SK-N-SH (cell line): ENCODE measurements at regions of chr17 and their contacts with region 1.

Region 1: DNA sequence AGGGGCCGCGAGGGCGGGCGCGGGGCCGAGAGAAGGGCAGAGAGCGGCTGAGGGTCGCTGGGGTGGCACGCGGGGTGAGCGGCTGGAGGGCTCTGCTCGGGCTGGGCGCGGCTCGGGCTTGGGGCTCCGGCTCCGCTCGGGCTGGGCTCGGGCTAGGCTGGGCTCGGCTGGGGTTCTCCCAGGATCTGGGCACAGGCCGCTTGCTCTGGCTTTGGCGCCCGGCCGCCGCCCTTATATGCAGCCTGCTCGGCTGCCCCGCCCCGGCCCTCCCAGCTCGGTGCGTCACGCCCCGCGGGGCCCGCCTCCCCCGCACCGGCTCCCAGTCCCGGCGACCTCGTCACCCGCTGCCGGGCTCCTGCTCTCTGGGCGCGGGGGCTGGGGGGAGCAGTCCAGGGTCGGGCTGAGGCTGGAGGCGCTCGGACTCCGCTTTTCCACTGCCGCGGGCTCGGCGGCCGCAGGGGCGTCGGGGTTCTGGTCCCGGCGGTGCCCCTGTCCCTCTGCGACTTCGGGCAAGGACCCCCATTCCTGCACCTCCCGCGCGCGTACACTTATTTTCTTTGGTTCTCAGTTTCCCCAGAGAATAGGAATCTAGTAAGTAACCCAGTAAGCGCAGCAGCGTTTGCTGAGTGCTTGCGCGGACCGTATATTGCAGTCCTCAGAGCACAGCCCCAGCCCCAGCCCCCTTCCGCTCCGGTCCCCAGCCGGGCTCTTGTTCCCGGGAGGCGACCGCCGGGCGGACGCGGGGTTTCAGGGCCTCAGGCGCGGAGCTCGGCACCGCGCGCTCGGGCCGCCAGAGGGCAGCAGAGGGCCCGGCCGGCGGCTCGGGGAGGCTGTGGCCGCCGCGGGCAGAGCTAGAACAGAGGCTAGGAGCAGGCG is at the start of gene RASD1:
- DNase-seq: peak; percentile 98
- H3K4me3 ChIP-seq: peak within 1 kb of the TSS; percentile 63 to 76
- H3K27ac ChIP-seq: peak within 1 kb of the TSS; percentile 44 to 60; a peak in 3 of 4 replicates
- H3K4me1 ChIP-seq: peaks cover 0 to 7% of the 10 kb centered on the region in 2 experiments; a peak in 1 of 4 replicates
- H3K27me3 ChIP-seq: no peaks in the 10 kb centered on the region
- CTCF ChIP-seq: peak; percentile 75
- EP300 ChIP-seq: no peak
- RAD21 ChIP-seq: peak; percentile 78
- polyA plus RNA-seq, gene RASD1: 0.26 and 0.43 TPM in 2 replicates

Region 2: DNA sequence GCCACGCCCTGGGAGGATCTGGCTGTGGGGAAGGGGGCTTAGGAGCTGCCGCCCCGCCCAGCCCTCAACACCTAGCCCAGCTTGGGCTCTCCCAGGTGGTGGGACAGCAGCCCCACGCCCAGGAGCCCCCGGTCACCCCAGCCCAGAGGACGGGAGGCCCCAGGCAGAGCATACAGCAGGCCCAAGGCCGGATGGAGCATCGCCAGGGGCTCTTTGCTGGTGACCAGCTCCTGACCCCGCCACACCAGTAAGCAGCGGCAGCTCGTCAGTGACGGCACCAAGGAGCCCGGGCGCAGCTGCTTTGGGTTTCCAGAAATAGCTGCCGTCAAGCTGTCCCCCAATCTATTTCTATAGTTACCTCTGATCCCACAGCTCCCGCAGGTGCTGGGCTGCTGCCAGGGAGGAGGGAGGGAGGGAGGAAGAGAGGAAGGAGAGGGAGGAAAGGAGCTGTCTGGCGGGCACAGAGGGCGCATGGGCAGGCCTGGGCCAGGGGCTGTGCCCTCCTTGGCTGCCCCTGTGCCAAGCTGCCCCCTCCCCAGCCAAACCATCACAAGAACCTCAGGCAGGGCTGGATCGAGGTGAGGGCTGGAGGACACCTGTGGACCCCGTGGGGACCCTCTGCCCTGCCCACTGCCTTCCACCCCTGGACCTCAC is 10.5 kb after region 1 on chr17:
- CTCF ChIA-PET with region 1: interaction called, 32 read pairs
- POLR2A ChIA-PET with region 1: no interaction called
- DNase-seq: peak; percentile 48
- H3K4me3 ChIP-seq: no peak overlapping the region
- H3K27ac ChIP-seq: no peak overlapping the region
- H3K4me1 ChIP-seq: peaks cover 2 to 21% of the 10 kb centered on the region in 2 experiments; a peak in 2 of 4 replicates
- H3K27me3 ChIP-seq: no peaks in the 10 kb centered on the region
- CTCF ChIP-seq: no peak
- EP300 ChIP-seq: no peak
- RAD21 ChIP-seq: no peak

Region 3: DNA sequence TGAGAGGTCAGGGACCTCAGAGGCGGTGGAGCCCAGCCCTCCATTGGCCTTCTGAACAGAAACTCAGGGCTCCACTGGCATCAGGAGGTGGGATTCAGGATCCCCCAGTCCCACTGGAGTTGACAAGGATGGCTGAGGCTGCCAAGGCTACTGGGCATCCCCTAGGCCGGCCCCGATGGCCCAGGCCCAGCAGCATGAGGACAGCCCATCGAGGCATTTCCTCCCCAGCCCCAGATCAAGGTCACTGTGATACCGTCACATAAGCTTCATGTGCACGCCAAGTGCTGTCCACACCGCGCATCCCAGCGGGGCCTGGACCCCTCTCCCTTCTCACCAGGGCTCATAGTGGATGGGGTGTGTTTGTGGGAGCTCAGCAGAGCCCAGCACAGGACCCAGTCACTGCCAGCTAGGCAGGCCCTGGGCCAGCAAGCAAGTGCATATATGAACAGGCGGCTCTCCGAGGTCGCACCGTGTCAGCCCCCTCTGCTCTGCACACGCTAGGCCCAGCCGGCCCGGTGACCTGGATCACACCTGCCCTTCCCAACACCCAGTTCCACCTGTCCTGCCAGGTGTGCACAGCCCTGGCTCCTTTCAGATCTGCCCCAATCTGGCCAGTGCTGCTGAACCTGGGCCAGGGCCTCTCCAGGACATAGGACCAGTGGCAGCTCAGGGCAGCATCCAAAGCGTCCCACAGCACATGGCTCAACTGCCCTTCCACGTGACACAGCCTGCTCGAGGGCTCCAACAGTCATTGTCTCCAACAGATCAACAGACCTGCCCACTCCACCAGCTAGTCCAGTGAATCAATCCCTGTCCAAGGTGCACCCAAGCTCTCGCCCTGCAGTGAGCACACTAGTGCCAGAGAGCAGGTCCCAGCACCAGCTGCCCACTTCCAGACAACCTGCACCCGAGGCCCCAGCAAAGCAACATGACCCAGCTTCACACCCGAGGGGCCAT is 32.5 kb after region 1 on chr17:
- CTCF ChIA-PET with region 1: interaction called, 16 read pairs
- POLR2A ChIA-PET with region 1: no interaction called
- DNase-seq: no peak
- H3K4me3 ChIP-seq: no peak overlapping the region
- H3K27ac ChIP-seq: no peak overlapping the region
- H3K4me1 ChIP-seq: peaks cover 0 to 3% of the 10 kb centered on the region in 2 experiments; a peak in 1 of 4 replicates
- H3K27me3 ChIP-seq: no peaks in the 10 kb centered on the region
- CTCF ChIP-seq: no peak
- EP300 ChIP-seq: no peak
- RAD21 ChIP-seq: no peak

Region 4: GRCh38 chr17:17552351-17553216 is 56.2 kb after region 1 on chr17:
- CTCF ChIA-PET with region 1: interaction called, 21 read pairs
- POLR2A ChIA-PET with region 1: interaction called, 5 read pairs
- DNase-seq: no peak
- H3K4me3 ChIP-seq: no peak overlapping the region
- H3K27ac ChIP-seq: no peak overlapping the region
- H3K4me1 ChIP-seq: peaks cover 0 to 28% of the 10 kb centered on the region in 2 experiments; a peak in 2 of 4 replicates
- H3K27me3 ChIP-seq: no peaks in the 10 kb centered on the region
- CTCF ChIP-seq: no peak
- EP300 ChIP-seq: no peak
- RAD21 ChIP-seq: no peak

Region 5: DNA sequence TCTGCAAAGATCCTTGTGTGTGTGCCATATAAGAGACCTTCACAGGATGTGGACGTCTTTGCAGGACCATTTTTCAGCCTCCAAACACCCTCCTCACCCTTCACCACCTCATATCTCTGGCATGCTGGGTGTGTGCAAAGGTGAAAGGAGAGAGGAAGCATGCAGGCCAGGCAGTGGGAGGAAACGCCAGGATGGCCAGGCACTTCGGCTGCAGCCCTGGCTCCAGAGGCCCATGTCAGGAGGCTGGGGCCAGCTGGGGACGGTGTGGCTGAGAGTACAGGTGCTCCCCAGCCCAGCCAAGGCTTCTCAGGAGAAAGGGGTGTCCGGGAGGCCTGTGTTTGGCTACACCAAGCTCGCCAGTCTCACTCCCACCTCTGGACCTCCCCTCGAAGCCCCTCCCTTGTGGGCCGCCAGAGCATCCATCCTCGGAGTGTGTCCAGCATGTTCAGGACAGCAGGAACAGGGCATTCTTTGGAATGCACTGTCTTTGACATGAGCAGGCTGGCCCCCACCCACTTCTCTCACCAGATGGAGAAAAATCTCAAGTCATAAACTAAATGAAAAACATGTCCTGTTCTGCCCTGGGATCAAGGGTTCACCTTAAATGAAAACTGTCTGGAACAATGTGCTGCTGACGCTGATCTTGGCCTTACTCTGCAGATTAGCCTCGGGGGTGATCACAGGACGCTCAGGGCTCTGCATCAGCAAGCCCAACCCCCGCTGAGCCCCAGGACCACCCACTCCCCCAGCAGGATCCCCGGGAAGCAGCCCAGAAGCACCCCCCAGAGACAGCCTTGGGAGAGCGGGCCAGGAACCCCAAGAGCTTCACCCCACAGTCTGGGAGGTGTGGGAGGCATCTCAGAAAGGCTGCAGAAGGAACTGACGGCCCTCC is 79.2 kb after region 1 on chr17:
- CTCF ChIA-PET with region 1: interaction called, 185 read pairs
- POLR2A ChIA-PET with region 1: interaction called, 3 read pairs
- DNase-seq: no peak
- H3K4me3 ChIP-seq: no peak overlapping the region
- H3K27ac ChIP-seq: no peak overlapping the region
- H3K4me1 ChIP-seq: peaks cover 0 to 24% of the 10 kb centered on the region in 2 experiments; a peak in 1 of 4 replicates
- H3K27me3 ChIP-seq: no peaks in the 10 kb centered on the region
- CTCF ChIP-seq: no peak
- EP300 ChIP-seq: no peak
- RAD21 ChIP-seq: no peak

Region 6: DNA sequence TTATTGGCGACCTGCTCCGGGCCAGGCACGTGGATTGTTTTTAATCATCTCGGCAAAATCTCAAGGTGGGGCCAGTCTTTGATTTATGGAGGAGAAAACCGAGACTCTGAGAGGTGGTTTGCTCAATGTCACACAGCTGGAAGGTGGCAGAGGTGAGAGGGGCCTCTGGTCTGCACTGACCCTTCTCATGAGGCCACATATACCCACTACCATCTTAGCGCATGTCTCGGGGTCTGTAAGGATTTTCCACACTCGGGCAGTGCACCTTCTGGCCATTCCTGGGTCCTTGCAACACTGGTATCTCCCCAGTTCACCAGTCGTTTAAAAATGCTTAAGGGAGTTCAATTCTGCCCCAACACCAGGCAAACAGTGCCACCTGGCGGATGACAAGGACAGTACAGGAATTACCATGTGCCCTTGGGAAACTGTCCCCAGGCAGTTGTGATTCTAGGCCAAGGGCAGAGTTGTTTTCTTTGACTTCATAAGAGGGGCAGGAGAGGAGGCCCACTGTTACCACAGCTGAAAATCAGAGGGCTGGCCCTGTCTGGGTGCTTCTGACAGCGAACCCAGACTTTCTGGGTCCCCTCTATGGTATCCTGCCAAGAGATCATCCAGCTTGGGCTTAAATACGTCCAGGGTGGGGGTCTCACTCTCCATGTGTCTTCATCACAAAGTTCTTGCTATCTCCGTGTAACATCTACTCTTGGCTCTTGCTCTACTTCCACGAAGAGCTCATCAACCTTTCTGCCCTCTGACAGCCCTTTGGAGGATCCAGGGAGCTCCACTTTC is 145.4 kb after region 1 on chr17:
- CTCF ChIA-PET with region 1: interaction called, 24 read pairs
- POLR2A ChIA-PET with region 1: interaction called, 3 read pairs
- DNase-seq: peak; percentile 74
- H3K4me3 ChIP-seq: peak overlapping the region in 1 of 2 experiments; percentile 30; a peak in 1 of 4 replicates
- H3K27ac ChIP-seq: no peak overlapping the region
- H3K4me1 ChIP-seq: no peaks in the 10 kb centered on the region; a peak in 1 of 4 replicates
- H3K27me3 ChIP-seq: no peaks in the 10 kb centered on the region
- CTCF ChIP-seq: peak; percentile 86
- EP300 ChIP-seq: no peak
- RAD21 ChIP-seq: peak; percentile 97

Region 7: GRCh38 chr17:17739388-17740066 is 243.1 kb after region 1 on chr17:
- CTCF ChIA-PET with region 1: no interaction called
- POLR2A ChIA-PET with region 1: no interaction called
- DNase-seq: peak; percentile 78
- H3K4me3 ChIP-seq: no peak overlapping the region; a peak in 1 of 4 replicates
- H3K27ac ChIP-seq: peak overlapping the region; percentile 11 to 91; a peak in 3 of 4 replicates
- H3K4me1 ChIP-seq: peaks cover 44 to 71% of the 10 kb centered on the region in 2 experiments
- H3K27me3 ChIP-seq: no peaks in the 10 kb centered on the region
- CTCF ChIP-seq: no peak
- EP300 ChIP-seq: peak in 1 of 2 experiments; percentile 36; a peak in 3 of 4 replicates
- RAD21 ChIP-seq: no peak; the same call in 1 of the 2 replicates